Common myeloid progenitor, CD34-positive (primary cell): ENCODE measurements at regions of chr1 and their contacts with region 1.

Region 1: DNA sequence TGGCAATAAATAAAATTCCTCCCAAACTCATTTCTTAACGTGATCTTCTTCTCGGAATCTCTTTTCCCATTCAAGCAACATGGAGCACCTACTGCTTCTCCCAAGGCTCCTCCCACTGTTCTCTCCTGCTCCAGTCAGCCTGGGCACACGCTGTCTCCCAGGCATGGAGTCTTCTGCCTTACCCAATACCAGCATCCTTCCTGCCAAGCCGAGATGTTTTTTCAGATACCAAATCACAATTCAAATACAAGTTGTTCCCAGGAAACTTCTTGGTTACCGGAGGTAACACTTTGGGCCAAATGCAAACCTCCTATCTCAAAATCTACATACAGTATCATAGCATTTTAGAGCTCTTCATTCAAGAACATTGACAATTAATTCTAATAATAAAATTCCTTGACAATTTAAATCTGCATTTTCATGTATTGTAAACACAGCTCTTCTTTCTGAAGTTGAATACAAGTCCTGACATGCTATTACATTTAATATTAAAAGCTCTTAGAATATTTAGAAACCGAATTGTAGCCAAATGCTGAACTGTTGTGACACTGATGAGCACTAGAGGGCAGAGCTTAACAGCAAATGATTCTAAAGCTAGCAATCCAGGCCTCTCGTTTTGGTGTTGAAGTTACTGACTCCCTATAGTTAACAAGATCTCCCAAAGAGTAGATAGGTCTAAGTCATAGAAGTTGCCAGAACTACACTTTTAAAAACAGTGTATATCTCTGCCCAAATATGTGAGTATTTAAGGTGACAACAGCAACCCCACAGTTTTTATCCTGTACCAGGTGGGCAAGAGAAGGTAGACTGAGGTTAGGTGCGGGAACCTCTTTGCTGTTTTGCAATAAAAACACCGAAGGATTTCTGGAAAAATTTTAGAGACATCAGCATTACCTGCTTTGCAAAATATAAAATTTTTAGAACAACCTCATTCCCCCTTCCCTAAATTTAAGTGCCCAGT is 52.3 kb downstream of the BCAR3 start:
- DNase-seq: peak; percentile 76 to 88 (median 82)
- H3K4me3 ChIP-seq: no peak overlapping the region
- H3K27ac ChIP-seq: no peak overlapping the region
- H3K4me1 ChIP-seq: no peaks in the 10 kb centered on the region
- H3K27me3 ChIP-seq: no peaks in the 10 kb centered on the region

Region 2: DNA sequence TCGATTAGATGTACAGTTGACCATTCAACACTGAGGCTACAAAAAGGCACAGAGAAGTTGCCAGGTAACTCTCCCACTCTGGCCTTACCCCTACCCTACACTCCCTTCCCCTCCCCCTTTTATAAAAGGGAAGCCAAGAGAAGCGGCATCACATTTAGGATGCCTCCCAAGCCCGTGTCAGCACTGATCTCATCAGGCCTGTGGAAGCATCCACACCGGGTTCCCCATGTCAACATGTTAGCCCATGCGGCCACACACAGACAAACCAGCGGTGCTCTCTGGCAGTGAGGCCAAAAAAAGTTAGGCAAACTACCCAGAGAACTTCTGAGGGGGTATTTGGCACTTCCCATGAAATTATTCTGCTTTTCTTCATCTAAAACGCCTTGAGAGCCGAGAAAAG is 22.3 kb after region 1 on chr1:
- CTCF ChIA-PET with region 1: no interaction called
- POLR2A ChIA-PET with region 1: no interaction called
- DNase-seq: no peak
- H3K4me3 ChIP-seq: no peak overlapping the region
- H3K27ac ChIP-seq: no peak overlapping the region
- H3K4me1 ChIP-seq: no peaks in the 10 kb centered on the region
- H3K27me3 ChIP-seq: no peaks in the 10 kb centered on the region

Region 3: DNA sequence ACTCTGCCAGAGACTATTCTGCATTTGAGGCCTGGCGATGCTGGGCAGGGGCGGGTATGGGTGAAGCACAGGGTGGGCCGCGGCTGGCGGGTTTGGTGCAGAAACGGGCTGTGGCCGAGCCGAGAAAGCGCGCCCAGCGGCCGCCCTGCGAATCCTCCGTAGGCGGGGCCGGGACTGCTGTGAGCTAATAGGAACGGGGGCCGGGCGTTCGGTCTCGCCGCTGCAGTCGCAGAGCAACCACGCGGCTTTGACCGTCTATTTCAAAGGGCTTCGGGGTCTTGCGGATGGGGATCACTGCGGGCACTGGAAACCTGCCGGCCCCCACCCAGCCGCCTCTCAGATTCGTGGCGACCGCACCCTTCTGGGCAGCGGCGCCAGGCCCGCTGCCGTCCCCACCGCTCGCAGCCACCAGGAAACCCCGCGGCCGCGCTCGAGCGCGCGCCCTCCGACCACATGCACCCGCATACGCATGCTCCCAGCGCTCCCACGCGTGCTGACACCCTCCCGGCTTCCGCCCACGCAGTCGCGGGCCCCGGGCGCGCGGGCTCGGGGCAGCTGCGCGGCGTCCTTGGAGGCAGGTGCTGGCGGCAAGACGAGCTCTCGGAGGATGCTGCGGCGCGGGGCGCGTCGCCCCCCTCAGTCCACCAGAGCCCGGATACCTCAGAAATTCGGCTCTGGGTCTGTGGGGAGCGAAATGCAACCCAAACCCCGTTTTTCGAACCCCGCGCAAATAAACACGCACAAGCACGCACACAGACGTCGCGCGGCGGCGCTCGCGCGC is 217.0 kb after region 1 on chr1:
- CTCF ChIA-PET with region 1: interaction called, 153 read pairs
- POLR2A ChIA-PET with region 1: interaction called, 3 read pairs
- DNase-seq: peak; percentile 80 to 90 (median 85)
- H3K4me3 ChIP-seq: peak overlapping the region; percentile 84 to 98 (median 87)
- H3K27ac ChIP-seq: peak overlapping the region; percentile 50 to 83
- H3K4me1 ChIP-seq: peaks cover 8 to 36% (median 24%) of the 10 kb centered on the region in 4 experiments
- H3K27me3 ChIP-seq: no peaks in the 10 kb centered on the region

Region 4: DNA sequence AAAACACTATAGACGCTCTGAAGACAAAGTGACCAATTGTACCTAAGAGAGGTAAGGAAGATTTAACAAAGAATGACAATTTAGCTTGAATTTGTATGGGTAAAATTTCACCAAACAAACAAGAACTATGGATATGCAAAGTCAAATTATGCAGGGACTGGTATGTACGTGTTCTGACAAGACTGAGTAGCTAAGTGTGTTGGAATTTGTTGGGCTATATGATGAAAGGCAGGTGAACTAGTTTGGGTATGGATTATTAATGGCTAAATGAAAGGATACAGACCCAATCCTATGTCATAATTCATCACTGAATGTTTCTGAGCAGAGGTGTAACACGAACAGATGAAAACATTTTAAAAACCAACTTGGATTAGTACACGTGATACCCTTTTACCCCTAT is 242.0 kb after region 1 on chr1:
- CTCF ChIA-PET with region 1: interaction called, 16 read pairs
- POLR2A ChIA-PET with region 1: no interaction called
- DNase-seq: no peak
- H3K4me3 ChIP-seq: no peak overlapping the region
- H3K27ac ChIP-seq: no peak overlapping the region
- H3K4me1 ChIP-seq: peaks cover 0 to 6% (median 5%) of the 10 kb centered on the region in 4 experiments
- H3K27me3 ChIP-seq: no peaks in the 10 kb centered on the region